Right cardiac atrium (tissue), 5 donors: ENCODE measurements at regions of chr17 and their contacts with region 1.

Region 1: DNA sequence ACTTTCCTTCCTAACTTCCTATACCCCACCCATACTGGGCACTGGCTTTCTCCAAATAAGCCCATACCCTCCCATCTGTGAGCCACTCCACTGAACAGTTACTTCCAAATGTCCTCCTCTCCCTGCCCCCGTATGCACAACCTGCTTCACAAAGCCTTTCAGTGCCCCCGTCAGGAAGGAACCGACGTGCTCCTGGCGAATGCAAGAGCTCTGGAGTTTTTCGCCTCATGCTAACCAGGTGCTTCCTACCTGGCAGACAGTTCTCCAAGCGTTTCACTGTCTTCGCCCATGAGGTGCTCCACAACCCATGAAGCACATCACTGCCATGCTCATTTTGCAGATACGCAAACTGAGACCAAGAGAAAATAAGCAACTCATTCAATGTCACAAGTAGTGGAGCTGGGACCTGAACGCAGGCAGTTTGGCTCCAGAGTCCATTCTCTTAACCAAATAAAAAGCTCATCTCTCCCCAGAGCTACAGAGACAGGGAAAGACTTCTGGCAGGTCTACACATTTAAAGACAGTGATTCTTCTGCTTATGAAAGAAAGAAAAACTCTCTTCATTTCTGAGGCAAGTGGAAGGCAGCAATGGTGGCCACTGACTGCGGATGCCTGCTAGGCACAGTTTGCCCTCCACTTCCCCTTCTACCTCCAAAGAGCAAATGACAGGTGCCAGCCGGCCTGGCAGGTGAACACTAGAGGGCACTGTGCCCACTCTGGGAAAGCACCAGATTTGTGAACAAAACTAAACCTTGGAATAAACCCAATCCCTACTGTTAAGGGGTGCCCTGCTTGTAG is 23.8 kb downstream of the SPHK1 start:
- DNase-seq: peak in 2 of 3 donors; percentile 77 to 81
- ATAC-seq: no peak
- H3K4me3 ChIP-seq: no peak overlapping the region
- H3K27ac ChIP-seq: no peak overlapping the region
- H3K4me1 ChIP-seq: peaks cover 8% of the 10 kb centered on the region
- H3K27me3 ChIP-seq: no peaks in the 10 kb centered on the region

Region 2: GRCh38 chr17:76446449-76447231 is 38.4 kb after region 1 on chr17:
- intact Hi-C with region 1: loop called in 2 of 4 experiments (anchors 5 to 10 kb)
- DNase-seq: no peak
- ATAC-seq: peak; percentile 21 to 37
- H3K4me3 ChIP-seq: no peak overlapping the region
- H3K27ac ChIP-seq: peak overlapping the region; percentile 40
- H3K4me1 ChIP-seq: peaks cover 8% of the 10 kb centered on the region
- H3K27me3 ChIP-seq: no peaks in the 10 kb centered on the region

Region 3: GRCh38 chr17:76452660-76453430 is 44.6 kb after region 1 on chr17 and contains the start of gene UBE2O:
- intact Hi-C with region 1: loop called in 3 of 4 experiments (anchors 5 to 10 kb)
- DNase-seq: peak; percentile 89 to 96 (median 95)
- ATAC-seq: peak; percentile 95 to 96
- H3K4me3 ChIP-seq: peak within 1 kb of the TSS; percentile 77
- H3K27ac ChIP-seq: peak within 1 kb of the TSS; percentile 60
- H3K4me1 ChIP-seq: no peaks in the 10 kb centered on the region
- H3K27me3 ChIP-seq: no peaks in the 10 kb centered on the region
- total RNA-seq, gene UBE2O: 24.2 to 37.3 (median 34.1) TPM

Region 4: GRCh38 chr17:76458580-76459490 is 50.6 kb after region 1 on chr17:
- intact Hi-C with region 1: loop called in 2 of 4 experiments (anchors 5 to 10 kb)
- DNase-seq: peak in 2 of 3 donors; percentile 74 to 80
- ATAC-seq: peak; percentile 67 to 70
- H3K4me3 ChIP-seq: no peak overlapping the region
- H3K27ac ChIP-seq: no peak overlapping the region
- H3K4me1 ChIP-seq: no peaks in the 10 kb centered on the region
- H3K27me3 ChIP-seq: no peaks in the 10 kb centered on the region

Region 5: DNA sequence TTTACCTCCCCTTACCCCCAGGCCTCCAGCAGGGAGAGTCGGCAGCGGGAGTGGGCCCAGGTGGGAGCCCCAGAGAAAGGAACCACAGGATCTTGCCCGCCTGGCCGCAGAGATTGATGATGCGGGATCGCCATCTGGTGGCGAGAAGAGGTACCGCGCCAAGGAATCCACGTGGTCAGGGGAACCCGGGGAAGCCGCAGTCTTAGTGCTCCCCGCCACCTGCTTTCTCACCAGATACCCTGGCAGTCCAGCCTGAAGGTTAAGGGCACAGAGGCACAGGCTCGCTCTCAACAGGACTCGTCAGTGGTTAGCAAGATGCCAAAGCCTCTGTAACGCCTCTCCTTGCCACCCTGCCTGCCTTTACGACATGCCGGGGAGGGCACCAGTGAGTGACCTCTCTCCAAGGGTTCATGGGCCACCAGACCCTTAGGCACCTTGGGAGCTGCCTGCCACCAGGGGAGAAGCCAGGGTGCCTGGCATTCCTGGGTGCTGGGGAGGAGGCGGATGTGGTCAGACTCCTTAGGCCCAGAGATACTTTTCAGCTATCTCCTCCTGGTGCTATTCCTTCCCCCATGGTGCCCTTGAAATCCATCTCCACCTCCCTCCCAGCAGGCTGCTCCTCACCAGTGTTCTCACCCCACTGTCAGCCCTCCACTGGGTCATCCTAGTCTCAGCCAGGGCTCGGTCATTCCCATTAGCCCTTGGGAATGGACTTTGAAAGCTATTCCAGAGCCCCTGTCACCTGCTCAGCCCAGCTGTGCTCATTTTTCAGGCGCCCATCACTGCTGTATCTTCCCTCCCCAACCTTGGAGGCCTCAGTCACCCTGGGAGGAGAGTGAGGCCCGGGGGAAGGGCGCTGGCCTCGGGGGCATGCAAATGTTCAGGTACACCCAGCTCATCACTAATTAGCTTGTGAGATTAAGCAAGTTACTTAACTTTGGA is 98.4 kb after region 1 on chr17:
- intact Hi-C with region 1: loop called in 1 of 4 experiments (anchors 5 kb)
- DNase-seq: peak; percentile 76 to 93 (median 91)
- ATAC-seq: peak; percentile 64 to 77
- H3K4me3 ChIP-seq: no peak overlapping the region
- H3K27ac ChIP-seq: no peak overlapping the region
- H3K4me1 ChIP-seq: peaks cover 6% of the 10 kb centered on the region
- H3K27me3 ChIP-seq: no peaks in the 10 kb centered on the region

Region 6: GRCh38 chr17:76911299-76912017 is 503.2 kb after region 1 on chr17:
- intact Hi-C with region 1: no loop called
- DNase-seq: peak in 1 of 3 donors; percentile 28
- ATAC-seq: no peak
- H3K4me3 ChIP-seq: no peak overlapping the region
- H3K27ac ChIP-seq: no peak overlapping the region
- H3K4me1 ChIP-seq: no peaks in the 10 kb centered on the region
- H3K27me3 ChIP-seq: no peaks in the 10 kb centered on the region